ENCODE measurements at regions of chr5 and their contacts with region 1.

Region 1: GRCh38 chr5:163347671-163348070 is 89.7 kb upstream of the CCNG1 start:
- DNase-seq: peak; percentile 60
- CTCF ChIP-seq: peak; percentile 90

Region 2: DNA sequence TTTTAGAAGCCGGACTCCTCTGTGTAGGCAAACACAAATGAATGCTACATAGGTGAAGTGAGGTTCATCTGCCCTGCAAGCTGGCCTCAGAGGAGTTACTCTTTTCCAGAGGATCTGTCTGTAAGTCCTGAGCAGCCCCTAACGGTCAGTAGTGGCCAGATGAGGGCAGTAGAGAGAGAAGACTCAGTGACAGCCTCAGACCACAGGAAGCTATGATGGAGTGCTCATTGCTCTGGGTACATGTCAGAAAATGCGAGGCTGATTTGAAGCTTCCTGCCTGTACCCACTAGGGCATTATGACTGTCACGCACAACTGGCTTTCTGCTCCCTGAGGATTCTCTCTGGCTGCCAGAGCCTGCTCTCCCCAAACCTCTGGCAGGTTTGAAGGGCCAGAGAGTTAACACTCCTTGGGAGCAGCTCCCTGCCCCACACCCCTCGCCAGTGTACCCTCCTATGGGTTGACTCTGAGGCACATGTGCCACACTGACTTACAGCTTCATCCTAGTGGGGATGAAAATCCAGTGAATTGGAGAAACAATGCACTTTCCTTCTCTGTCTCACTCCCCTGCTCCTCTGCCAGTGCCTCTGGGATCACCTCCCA is 1138.6 kb before region 1 on chr5:
- CTCF ChIA-PET with region 1: interaction called, 33 read pairs
- POLR2A ChIA-PET with region 1: no interaction called
- DNase-seq: peak; percentile 28
- CTCF ChIP-seq: peak; percentile 55

Region 3: DNA sequence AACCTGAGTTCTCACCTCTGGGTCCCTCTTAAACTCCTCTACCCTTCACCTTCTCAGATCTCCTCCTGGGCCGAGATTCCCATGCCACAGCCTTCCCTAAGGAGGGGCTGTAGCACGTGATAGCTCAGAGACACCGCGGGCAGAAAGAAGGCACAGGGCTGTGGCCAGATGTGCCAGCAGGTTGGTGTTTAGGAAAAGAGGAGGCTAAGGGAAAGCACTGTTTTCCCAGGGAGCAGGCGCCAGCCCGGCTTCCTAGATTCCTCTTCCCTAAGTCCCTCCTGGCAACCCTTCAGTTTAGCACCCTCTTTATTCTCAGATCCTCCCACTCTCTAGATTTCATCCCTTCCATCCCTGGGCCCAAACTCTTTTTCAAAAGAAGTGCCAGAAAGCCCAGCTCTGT is 30.3 kb after region 1 on chr5:
- CTCF ChIA-PET with region 1: no interaction called
- POLR2A ChIA-PET with region 1: no interaction called
- DNase-seq: no peak
- CTCF ChIP-seq: no peak

Measured in GM10248 (cell line).